ENCODE measurements at regions of chr9 and their contacts with region 1.

Region 1: DNA sequence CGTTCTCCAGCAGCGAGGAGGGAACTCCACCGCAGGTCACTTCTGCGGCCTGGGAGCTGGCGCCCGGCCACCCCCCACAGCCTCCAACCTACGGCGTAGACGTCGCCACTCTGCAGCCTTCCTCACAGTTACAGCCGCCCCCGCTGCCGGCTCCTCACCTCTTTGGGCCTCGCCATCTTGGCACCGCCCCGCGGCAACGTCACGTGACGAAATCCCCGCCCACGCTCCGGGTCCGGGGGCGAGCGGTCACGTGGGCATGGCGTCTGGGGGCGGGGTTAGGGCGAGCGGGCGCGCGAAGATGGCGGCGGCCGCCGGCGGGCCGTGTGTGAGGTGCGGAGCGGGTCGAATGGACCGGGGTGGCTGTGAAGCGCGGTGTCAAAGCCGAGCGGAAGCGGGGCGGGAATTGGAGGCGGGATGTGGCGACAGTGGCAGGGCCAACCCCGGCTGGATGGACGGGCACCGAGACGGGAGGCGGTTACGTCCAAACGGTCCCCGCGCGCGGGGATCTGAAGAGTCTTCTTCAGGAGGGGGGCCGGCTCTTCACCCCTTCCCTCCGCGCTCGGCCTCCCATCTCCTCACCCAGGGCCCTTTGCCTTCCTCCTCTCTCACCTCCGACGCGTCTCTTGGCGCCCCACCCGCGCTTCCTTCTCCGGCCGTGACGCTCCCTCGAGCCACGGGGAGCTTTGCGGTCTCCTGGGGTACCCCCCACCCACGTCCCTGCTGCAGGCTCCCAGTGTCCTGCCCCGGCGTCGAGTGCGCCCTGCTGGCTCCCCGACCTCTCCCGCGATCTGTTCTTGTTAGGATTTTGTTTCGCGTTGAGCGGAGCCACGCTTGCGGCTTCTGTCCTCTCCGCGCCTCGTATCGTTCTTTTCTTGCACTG is at the starts of genes DOLK and NUP188:
- DNase-seq: peak; percentile 98
- ATAC-seq: peak; percentile 86
- H3K4me3 Mint-ChIP-seq: peak within 1 kb of the TSS; percentile 97
- H3K27ac Mint-ChIP-seq: peak within 1 kb of the TSS; percentile 95
- H3K4me1 Mint-ChIP-seq: peaks cover 11% of the 10 kb centered on the region
- H3K27me3 Mint-ChIP-seq: no peaks in the 10 kb centered on the region
- CTCF ChIP-seq: no peak
- total RNA-seq, gene DOLK: 14.8 to 15.1 TPM (median 15.1 TPM) in 3 replicates
- total RNA-seq, gene NUP188: 71.3 to 98.9 TPM (median 73.5 TPM) in 3 replicates

Region 2: GRCh38 chr9:128838338-128838737 is 109.3 kb before region 1 on chr9:
- CTCF ChIA-PET with region 1: no interaction called
- POLR2A ChIA-PET with region 1: interaction called, 12 read pairs
- DNase-seq: no peak
- ATAC-seq: no peak
- H3K4me3 Mint-ChIP-seq: no peak overlapping the region
- H3K27ac Mint-ChIP-seq: no peak overlapping the region
- H3K4me1 Mint-ChIP-seq: no peaks in the 10 kb centered on the region
- H3K27me3 Mint-ChIP-seq: no peaks in the 10 kb centered on the region
- CTCF ChIP-seq: no peak

Measured in WTC11 (cell line).